ENCODE measurements at regions of chr11 and their contacts with region 1.

Region 1: GRCh38 chr11:18634140-18635032 is at the start of gene SPTY2D1:
- DNase-seq: peak; percentile 97
- CTCF ChIP-seq: no peak

Region 2: DNA sequence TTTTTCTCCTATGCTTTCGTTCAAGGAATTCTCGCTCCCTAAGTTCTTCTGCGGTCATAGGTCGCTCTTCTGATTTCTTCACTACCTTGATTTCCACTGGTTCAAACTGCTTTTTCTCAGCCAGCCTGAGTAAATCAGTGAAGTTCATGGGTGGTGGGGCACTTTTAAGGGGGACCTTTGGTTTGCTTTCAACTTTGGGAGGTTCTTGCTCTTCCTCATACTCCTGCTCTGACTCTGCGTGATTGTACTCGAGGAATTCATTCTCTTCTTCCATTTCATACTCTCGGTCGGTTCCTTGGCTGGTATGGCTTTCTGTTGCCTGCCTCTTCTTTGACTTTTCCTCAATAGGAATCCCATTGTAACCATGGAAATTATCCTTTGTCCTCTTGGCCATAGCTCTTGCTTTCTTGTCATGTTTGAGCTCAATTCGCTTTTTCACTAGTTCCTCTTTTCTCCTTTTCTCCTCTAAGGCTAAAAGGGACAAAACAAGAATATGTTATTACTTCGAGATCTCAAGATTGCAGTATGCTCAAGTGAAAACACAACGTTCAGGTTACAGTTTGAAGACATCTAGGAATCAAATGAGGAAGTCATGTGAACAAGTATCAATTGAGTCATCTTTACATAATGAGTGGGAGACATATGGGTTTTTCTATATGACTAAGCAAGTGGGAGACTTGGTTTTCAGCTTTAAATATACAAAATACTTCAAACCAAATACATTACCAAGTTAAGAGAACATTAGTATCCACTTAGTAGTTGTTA is 18.6 kb before region 1 on chr11:
- CTCF ChIA-PET with region 1: interaction called, 65 read pairs
- POLR2A ChIA-PET with region 1: interaction called, 11 read pairs
- DNase-seq: peak; percentile 80
- CTCF ChIP-seq: no peak

Region 3: GRCh38 chr11:18650859-18651557 is 16.6 kb after region 1 on chr11:
- CTCF ChIA-PET with region 1: interaction called, 11 read pairs
- POLR2A ChIA-PET with region 1: no interaction called
- DNase-seq: peak; percentile 70
- CTCF ChIP-seq: peak; percentile 62